ENCODE measurements at regions of chr14 and their contacts with region 1.

Region 1: DNA sequence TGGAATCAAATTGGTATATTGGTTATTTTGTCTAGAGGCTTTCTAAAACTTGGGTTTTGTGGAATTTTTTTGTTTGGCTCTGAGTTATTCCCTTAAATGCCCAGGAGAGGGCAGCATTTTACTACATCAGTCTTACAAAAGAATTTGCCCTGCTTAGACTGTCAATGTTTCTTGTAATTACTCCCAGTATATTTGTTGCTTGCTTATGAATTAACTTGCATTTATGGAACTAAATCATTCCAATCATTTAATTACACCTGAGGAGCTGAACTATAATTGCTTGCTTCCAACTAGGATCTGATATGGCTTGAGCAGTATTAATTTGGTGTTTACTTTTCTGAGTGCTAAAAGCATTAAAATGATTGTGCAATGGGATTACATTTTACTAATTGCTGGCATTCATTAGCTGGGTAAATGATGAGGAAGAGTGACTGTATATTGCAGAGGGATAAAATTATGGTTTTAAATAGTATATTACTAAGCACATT is 48.7 kb downstream of the MIPOL1 start:
- DNase-seq: peak; percentile 39
- ATAC-seq: no peak
- H3K4me3 ChIP-seq: no peak overlapping the region
- H3K27ac ChIP-seq: no peak overlapping the region
- H3K4me1 ChIP-seq: no peaks in the 10 kb centered on the region
- H3K27me3 ChIP-seq: no peaks in the 10 kb centered on the region
- CTCF ChIP-seq: peak; percentile 48 to 82 (median 61); a peak in 5 of 6 replicates
- POLR2A ChIP-seq: no peak
- RAD21 ChIP-seq: peak; percentile 64

Region 2: GRCh38 chr14:37230551-37231194 is 15.8 kb before region 1 on chr14:
- CTCF ChIA-PET with region 1: interaction called, 17 read pairs
- POLR2A ChIA-PET with region 1: no interaction called
- RAD21 ChIA-PET with region 1: no interaction called
- intact Hi-C with region 1: no loop called
- DNase-seq: peak; percentile 48
- ATAC-seq: peak; percentile 81
- H3K4me3 ChIP-seq: no peak overlapping the region
- H3K27ac ChIP-seq: no peak overlapping the region
- H3K4me1 ChIP-seq: no peaks in the 10 kb centered on the region
- H3K27me3 ChIP-seq: no peaks in the 10 kb centered on the region
- CTCF ChIP-seq: peak; percentile 24 to 86 (median 62); a peak in 4 of 6 replicates
- POLR2A ChIP-seq: no peak
- RAD21 ChIP-seq: peak; percentile 42

Region 3: DNA sequence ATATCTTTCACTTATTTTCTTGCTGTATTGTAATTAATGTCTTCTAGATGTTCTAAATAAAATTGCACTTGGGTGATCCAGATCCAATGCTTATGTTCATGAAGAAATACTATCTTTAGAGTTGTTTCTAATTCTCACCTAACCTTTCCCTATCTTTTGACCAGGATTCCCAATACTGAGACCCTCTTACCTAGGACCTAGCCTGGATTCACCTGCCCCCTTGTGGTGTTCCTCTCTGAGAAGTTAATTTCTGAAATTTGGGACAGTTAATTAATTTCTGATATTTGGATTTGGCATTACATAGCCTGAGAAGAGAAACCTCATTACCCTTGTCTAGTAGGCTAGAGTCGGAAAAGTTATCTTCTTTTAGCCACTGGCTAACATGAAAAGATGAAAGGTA is 319.1 kb after region 1 on chr14:
- CTCF ChIA-PET with region 1: no interaction called
- POLR2A ChIA-PET with region 1: no interaction called
- RAD21 ChIA-PET with region 1: no interaction called
- intact Hi-C with region 1: loop called (anchors 1 kb)
- DNase-seq: no peak
- ATAC-seq: no peak
- H3K4me3 ChIP-seq: no peak overlapping the region
- H3K27ac ChIP-seq: no peak overlapping the region
- H3K4me1 ChIP-seq: no peaks in the 10 kb centered on the region
- H3K27me3 ChIP-seq: no peaks in the 10 kb centered on the region
- CTCF ChIP-seq: peak; percentile 22 to 55 (median 37); a peak in 5 of 6 replicates
- POLR2A ChIP-seq: no peak
- RAD21 ChIP-seq: peak; percentile 44

Region 4: GRCh38 chr14:37594238-37594914 is 347.9 kb after region 1 on chr14:
- CTCF ChIA-PET with region 1: interaction called, 3 read pairs
- POLR2A ChIA-PET with region 1: no interaction called
- RAD21 ChIA-PET with region 1: no interaction called
- intact Hi-C with region 1: loop called (anchors 1 kb)
- DNase-seq: peak; percentile 76
- ATAC-seq: peak; percentile 61
- H3K4me3 ChIP-seq: peak overlapping the region; percentile 61 to 67
- H3K27ac ChIP-seq: peak overlapping the region; percentile 42; the same call in 1 of the 2 replicates
- H3K4me1 ChIP-seq: peaks cover 5 to 14% of the 10 kb centered on the region in 2 experiments; a peak in 3 of 4 replicates
- H3K27me3 ChIP-seq: no peaks in the 10 kb centered on the region
- CTCF ChIP-seq: peak; percentile 56 to 91 (median 80)
- POLR2A ChIP-seq: no peak
- RAD21 ChIP-seq: peak; percentile 65

Region 5: DNA sequence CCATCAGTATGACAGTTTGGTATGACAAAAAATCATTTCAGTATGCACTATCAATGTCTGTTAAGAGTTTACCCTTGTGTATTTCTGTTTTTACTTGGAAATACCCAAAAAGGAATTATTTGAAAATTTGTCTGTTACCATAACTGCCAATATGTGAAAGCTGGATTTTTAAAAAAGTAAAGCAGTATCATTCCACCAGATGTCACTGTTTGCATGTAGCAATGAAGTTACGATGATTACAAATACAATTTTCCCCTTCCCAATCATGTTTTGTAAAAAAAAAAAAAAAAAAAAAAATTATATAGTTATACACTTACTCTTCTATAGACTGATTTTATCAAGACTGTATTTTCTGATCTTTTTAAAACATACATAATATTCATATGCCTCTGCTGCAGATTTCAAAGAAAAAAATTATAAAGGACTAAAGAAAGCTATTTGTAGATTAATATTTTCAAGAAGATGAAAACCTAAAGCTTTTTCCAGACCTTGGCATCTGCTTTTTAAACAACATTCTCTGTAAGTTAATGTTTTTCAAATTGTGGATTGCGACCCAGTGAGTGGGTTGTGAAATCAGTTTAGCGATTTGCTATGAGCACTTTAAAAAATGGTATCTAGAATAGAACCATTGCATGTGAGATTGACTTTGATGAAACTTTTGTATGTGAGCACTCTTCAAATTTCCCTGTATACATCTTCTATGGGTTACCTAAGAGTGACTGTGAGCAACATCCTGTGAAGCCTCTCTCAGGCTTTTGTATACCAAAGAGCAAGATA is 463.1 kb after region 1 on chr14:
- CTCF ChIA-PET with region 1: no interaction called
- POLR2A ChIA-PET with region 1: no interaction called
- RAD21 ChIA-PET with region 1: no interaction called
- intact Hi-C with region 1: loop called (anchors 10 kb)
- DNase-seq: peak; percentile 16
- ATAC-seq: no peak
- H3K4me3 ChIP-seq: no peak overlapping the region
- H3K27ac ChIP-seq: no peak overlapping the region
- H3K4me1 ChIP-seq: no peaks in the 10 kb centered on the region
- H3K27me3 ChIP-seq: no peaks in the 10 kb centered on the region
- CTCF ChIP-seq: peak; percentile 39 to 52 (median 40); a peak in 3 of 6 replicates
- POLR2A ChIP-seq: no peak
- RAD21 ChIP-seq: peak; percentile 61

Region 6: GRCh38 chr14:37874429-37875191 is 628.1 kb after region 1 on chr14:
- CTCF ChIA-PET with region 1: interaction called, 10 read pairs
- POLR2A ChIA-PET with region 1: no interaction called
- RAD21 ChIA-PET with region 1: no interaction called
- intact Hi-C with region 1: loop called (anchors 1 kb)
- DNase-seq: peak; percentile 57
- ATAC-seq: peak; percentile 96
- H3K4me3 ChIP-seq: no peak overlapping the region
- H3K27ac ChIP-seq: no peak overlapping the region
- H3K4me1 ChIP-seq: peaks cover 0 to 4% of the 10 kb centered on the region in 2 experiments; a peak in 3 of 4 replicates
- H3K27me3 ChIP-seq: no peaks in the 10 kb centered on the region
- CTCF ChIP-seq: peak; percentile 52 to 94 (median 87); a peak in 5 of 6 replicates
- POLR2A ChIP-seq: no peak
- RAD21 ChIP-seq: peak; percentile 82

Region 7: GRCh38 chr14:38592764-38593442 is 1346.4 kb after region 1 on chr14:
- CTCF ChIA-PET with region 1: no interaction called
- POLR2A ChIA-PET with region 1: no interaction called
- RAD21 ChIA-PET with region 1: no interaction called
- intact Hi-C with region 1: no loop called
- DNase-seq: no peak
- ATAC-seq: no peak
- H3K4me3 ChIP-seq: no peak overlapping the region
- H3K27ac ChIP-seq: no peak overlapping the region
- H3K4me1 ChIP-seq: no peaks in the 10 kb centered on the region
- H3K27me3 ChIP-seq: no peaks in the 10 kb centered on the region
- CTCF ChIP-seq: no peak
- POLR2A ChIP-seq: no peak
- RAD21 ChIP-seq: no peak

Measured in HCT116 (cell line).